A673 (cell line): ENCODE measurements at regions of chr2 and their contacts with region 1.

Region 1: GRCh38 chr2:66434679-66435548 is at the start of gene MEIS1:
- DNase-seq: peak; percentile 98
- H3K4me3 ChIP-seq: peak within 1 kb of the TSS; percentile 59
- H3K27ac ChIP-seq: peak within 1 kb of the TSS; percentile 95
- H3K4me1 ChIP-seq: peaks cover 19% of the 10 kb centered on the region
- H3K27me3 ChIP-seq: no peaks in the 10 kb centered on the region
- CTCF ChIP-seq: no peak
- total RNA-seq, gene MEIS1: 89.4 and 103 TPM in 2 replicates

Region 2: GRCh38 chr2:65746931-65747675 is 687.8 kb before region 1 on chr2:
- CTCF ChIA-PET with region 1: no interaction called
- POLR2A ChIA-PET with region 1: no interaction called
- intact Hi-C with region 1: loop called (anchors 2 kb)
- DNase-seq: peak; percentile 82
- H3K4me3 ChIP-seq: no peak overlapping the region
- H3K27ac ChIP-seq: peak overlapping the region; percentile 100
- H3K4me1 ChIP-seq: peaks cover 62% of the 10 kb centered on the region
- H3K27me3 ChIP-seq: no peaks in the 10 kb centered on the region
- CTCF ChIP-seq: no peak

Region 3: DNA sequence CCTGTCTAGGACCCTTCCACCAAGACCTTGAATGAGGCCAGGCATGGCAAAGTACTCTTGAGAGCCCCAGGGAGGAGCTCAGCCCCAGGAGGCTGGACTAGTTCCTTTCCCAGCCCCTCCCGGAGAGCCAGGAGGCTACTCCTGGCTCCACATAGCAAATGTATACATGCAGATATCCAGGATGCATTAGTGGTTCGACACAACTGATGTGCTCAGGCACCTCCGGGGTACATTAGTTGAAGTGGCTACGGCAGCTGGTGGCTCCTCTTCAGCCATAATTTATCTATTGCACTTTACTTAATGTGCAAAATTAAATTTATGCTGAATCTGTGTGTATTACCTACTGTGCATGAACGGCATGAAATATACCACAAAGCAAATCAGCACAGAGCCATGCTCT is 182.8 kb before region 1 on chr2:
- CTCF ChIA-PET with region 1: no interaction called
- POLR2A ChIA-PET with region 1: interaction called, 12 read pairs
- intact Hi-C with region 1: no loop called
- DNase-seq: no peak
- H3K4me3 ChIP-seq: no peak overlapping the region
- H3K27ac ChIP-seq: no peak overlapping the region
- H3K4me1 ChIP-seq: no peaks in the 10 kb centered on the region
- H3K27me3 ChIP-seq: no peaks in the 10 kb centered on the region
- CTCF ChIP-seq: no peak

Region 4: GRCh38 chr2:66872081-66872985 is 437.4 kb after region 1 on chr2:
- CTCF ChIA-PET with region 1: no interaction called
- POLR2A ChIA-PET with region 1: no interaction called
- intact Hi-C with region 1: loop called (anchors 2 kb)
- DNase-seq: no peak
- H3K4me3 ChIP-seq: no peak overlapping the region
- H3K27ac ChIP-seq: peak overlapping the region; percentile 94
- H3K4me1 ChIP-seq: peaks cover 60% of the 10 kb centered on the region
- H3K27me3 ChIP-seq: no peaks in the 10 kb centered on the region
- CTCF ChIP-seq: no peak

Region 5: GRCh38 chr2:67234439-67234838 is 799.5 kb after region 1 on chr2:
- CTCF ChIA-PET with region 1: no interaction called
- POLR2A ChIA-PET with region 1: no interaction called
- intact Hi-C with region 1: loop called (anchors 5 kb)
- DNase-seq: peak; percentile 88
- H3K4me3 ChIP-seq: no peak overlapping the region
- H3K27ac ChIP-seq: no peak overlapping the region
- H3K4me1 ChIP-seq: peaks cover 25% of the 10 kb centered on the region
- H3K27me3 ChIP-seq: no peaks in the 10 kb centered on the region
- CTCF ChIP-seq: peak; percentile 84

Region 6: DNA sequence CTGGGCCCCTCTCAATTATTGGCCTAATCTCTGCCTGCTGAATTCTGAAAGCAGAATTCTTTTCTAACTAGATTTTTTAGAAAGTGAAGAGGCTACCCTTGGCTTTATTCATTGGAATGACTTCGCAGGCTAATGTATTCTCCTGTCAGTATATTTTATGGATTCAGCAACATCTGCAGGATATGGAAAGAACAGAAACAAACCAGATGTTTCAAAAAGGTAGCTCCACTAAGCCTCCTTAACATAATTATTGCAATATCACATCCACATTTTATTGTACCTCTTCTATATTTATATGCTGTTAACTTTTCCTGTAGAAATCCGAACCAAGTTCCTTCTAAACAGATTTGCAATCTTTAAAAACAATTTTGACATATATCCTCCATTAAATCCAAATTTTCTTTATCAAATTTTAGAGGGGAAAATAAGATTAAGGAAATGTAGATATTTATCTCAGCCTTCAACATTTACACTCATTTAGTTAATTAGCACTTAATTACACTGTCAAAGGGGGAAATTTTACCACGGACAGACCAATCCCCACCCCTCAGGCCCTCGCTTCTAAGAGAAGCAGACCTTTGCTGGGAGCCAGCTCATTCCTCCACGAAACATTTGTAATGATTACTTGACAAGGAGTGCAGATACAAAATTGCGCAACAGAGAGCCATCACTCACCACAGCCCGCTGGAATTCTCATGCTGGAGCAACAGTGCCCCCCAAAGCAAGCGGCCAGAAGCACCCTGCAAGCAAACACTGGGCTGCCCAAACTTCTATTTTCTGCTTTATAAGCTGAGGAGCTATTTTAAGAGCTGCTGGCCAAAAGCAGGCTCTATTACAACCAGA is 1215.6 kb after region 1 on chr2:
- CTCF ChIA-PET with region 1: interaction called, 10 read pairs
- POLR2A ChIA-PET with region 1: no interaction called
- intact Hi-C with region 1: loop called (anchors 10 kb)
- DNase-seq: peak; percentile 96
- H3K4me3 ChIP-seq: peak overlapping the region; percentile 21
- H3K27ac ChIP-seq: peak overlapping the region; percentile 70
- H3K4me1 ChIP-seq: peaks cover 26% of the 10 kb centered on the region
- H3K27me3 ChIP-seq: no peaks in the 10 kb centered on the region
- CTCF ChIP-seq: peak; percentile 89